A549 (cell line): ENCODE measurements at regions of chr17 and their contacts with region 1.

Region 1: DNA sequence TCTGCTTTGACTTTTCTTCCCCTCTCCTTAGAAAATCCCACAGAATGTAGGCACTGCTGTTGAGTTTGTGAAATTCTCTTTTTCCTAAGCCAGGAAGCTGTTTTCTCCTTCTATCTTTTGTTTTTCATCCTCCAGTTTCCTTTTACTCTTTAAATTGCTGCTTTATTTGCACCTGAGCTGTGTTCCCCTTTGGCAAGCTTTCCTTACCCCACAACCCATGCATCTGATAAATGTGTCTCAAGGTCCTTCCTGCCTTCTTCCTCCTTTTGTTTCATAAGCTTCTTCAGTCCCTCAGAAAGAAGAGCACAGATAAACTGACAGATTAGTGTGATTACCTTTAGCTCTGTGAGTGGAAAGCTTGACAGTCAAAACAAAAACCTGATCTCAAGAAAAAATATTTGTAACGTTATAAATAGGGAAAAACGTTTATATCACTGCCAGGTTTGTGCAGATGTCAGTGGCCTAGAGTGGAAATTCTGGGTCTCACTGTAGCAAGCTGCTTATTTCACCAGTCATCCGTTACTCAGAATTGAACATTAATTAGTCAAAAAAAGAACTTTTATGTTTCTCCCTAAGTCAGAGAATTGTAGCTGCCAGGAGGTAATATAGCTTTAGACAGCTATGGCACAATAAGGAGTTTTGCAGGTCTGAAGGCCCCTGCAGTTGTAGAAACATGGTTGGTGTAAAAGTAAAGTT is 23.6 kb downstream of the GSDMB start:
- DNase-seq: no peak
- ATAC-seq: no peak
- H3K4me3 ChIP-seq: no peak overlapping the region
- H3K27ac ChIP-seq: no peak overlapping the region
- H3K4me1 ChIP-seq: no peaks in the 10 kb centered on the region
- CTCF ChIP-seq: no peak
- EP300 ChIP-seq: no peak
- POLR2A ChIP-seq: no peak
- RAD21 ChIP-seq: no peak

Region 2: GRCh38 chr17:39800540-39800939 is 94.3 kb before region 1 on chr17:
- CTCF ChIA-PET with region 1: no interaction called
- POLR2A ChIA-PET with region 1: interaction called, 10 read pairs
- DNase-seq: no peak
- ATAC-seq: no peak
- H3K4me3 ChIP-seq: no peak overlapping the region
- H3K27ac ChIP-seq: no peak overlapping the region
- H3K4me1 ChIP-seq: no peaks in the 10 kb centered on the region
- CTCF ChIP-seq: no peak
- EP300 ChIP-seq: no peak
- POLR2A ChIP-seq: no peak
- RAD21 ChIP-seq: no peak